ENCODE measurements at regions of chr7 and their contacts with region 1.

Region 1: DNA sequence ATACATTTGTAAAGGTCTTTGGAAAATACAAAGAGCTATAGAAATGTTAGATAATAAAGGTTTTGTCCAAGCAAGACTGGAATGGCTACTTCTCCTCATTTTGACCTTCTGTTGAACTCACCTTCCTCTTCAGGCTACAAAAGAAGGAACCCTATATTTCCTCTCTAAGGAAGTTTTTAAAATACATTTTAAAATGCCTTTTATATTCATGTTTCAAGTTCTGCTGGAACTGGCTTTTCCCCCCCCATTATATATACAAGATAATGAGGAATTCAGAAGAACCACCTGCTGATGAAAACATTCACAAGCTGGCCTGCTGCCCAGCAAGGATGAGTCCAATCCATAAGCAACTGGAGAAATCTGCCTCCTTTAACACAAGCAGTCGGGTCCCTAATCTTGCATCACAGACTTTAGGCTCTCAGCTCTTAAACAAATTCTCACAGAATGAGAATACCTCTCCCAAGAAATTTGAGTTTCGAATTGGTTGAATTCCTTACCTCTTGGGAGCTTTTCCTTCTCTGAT is 44.6 kb downstream of the MTERF1 start:
- DNase-seq: no peak
- H3K4me3 ChIP-seq: no peak overlapping the region
- CTCF ChIP-seq: no peak

Region 2: DNA sequence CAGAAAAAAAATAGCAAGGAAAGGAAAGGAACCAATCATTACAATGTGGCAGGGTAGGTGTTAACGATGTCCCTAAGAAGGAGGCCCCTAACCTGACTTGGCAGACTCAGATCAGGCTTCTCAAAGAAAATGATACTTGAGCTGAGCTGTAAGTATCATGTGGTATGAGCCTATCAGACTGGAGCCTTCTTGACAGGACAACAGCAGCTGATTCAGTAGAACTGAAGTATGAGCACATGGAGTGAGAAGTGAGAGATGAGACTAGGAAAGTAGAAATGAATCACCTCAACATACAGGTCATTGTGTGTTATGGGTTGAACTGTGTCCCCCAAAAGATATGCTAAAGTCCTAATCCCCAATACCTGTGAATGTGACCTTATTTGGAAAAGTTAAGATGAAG is 21.7 kb before region 1 on chr7:
- CTCF ChIA-PET with region 1: interaction called, 12 read pairs
- POLR2A ChIA-PET with region 1: no interaction called
- DNase-seq: no peak
- H3K4me3 ChIP-seq: no peak overlapping the region
- CTCF ChIP-seq: no peak

Region 3: GRCh38 chr7:91869661-91870060 is 33.8 kb after region 1 on chr7:
- CTCF ChIA-PET with region 1: interaction called, 20 read pairs
- POLR2A ChIA-PET with region 1: no interaction called
- DNase-seq: no peak
- H3K4me3 ChIP-seq: no peak overlapping the region
- CTCF ChIP-seq: no peak

Region 4: DNA sequence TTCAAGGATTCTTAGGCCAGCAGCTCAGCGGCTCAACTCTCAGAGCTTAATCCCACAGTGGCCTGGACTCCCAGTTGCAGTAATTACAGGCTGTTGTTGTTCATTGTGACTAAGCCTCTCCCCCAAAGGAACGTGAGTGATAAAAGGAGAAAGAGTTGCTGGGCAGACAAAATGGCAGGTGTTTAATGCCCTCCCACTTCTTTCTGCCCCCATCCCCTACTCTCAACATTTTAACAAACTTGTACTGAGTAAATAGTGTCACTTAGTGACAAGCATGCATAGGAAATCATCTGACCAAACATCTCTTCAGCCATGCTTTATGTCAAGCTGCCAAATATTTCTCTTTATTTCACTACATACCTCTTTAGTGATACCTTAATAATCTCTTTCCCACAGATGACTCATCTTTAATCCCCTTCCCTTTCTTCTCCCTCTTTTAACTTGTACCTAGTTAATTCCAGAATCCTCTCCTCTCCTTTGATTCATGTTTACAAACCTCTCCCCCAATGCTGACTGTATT is 57.0 kb after region 1 on chr7:
- CTCF ChIA-PET with region 1: no interaction called
- POLR2A ChIA-PET with region 1: no interaction called
- DNase-seq: no peak
- H3K4me3 ChIP-seq: no peak overlapping the region
- CTCF ChIP-seq: no peak

Region 5: GRCh38 chr7:92043637-92044036 is 207.7 kb after region 1 on chr7:
- CTCF ChIA-PET with region 1: interaction called, 13 read pairs
- POLR2A ChIA-PET with region 1: no interaction called
- DNase-seq: no peak
- H3K4me3 ChIP-seq: no peak overlapping the region
- CTCF ChIP-seq: no peak

Measured in AG04449 (cell line).